ENCODE measurements at regions of chr3 and their contacts with region 1.

Region 1: GRCh38 chr3:128426128-128426921 is 40.4 kb downstream of the DNAJB8 start:
- DNase-seq: no peak
- ATAC-seq: peak; percentile 89
- H3K4me3 ChIP-seq: peak overlapping the region in 1 of 2 experiments; percentile 39; a peak in 1 of 4 replicates
- H3K27ac ChIP-seq: peak overlapping the region; percentile 65; the same call in 1 of the 2 replicates
- H3K4me1 ChIP-seq: peaks cover 37% of the 10 kb centered on the region
- H3K27me3 ChIP-seq: no peaks in the 10 kb centered on the region
- CTCF ChIP-seq: peak; percentile 100

Region 2: DNA sequence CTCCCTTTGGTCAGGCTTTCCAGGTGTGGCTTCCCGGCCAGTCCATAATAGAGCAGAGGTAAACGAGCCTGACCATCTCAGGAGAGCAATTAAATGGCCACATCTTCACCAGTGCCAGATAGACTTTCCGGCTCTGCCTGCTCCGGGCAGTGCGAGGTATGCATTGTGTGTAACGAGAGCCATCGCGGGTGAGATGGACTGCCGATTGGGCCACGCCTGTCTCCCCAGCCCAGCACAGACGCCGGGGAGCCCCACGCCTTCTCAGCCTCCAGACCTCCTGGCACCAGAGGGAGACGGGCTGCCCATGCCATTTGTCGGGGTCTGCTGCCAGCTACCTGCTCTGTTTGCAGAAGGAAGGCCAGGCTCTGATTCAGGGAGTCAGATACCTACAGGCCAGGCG is 22.1 kb before region 1 on chr3:
- CTCF ChIA-PET with region 1: interaction called, 4 read pairs
- POLR2A ChIA-PET with region 1: interaction called, 13 read pairs
- in situ Hi-C with region 1: no loop called
- intact Hi-C with region 1: no loop called
- DNase-seq: no peak
- ATAC-seq: no peak
- H3K4me3 ChIP-seq: no peak overlapping the region
- H3K27ac ChIP-seq: no peak overlapping the region
- H3K4me1 ChIP-seq: peaks cover 11% of the 10 kb centered on the region
- H3K27me3 ChIP-seq: no peaks in the 10 kb centered on the region
- CTCF ChIP-seq: no peak

Region 3: DNA sequence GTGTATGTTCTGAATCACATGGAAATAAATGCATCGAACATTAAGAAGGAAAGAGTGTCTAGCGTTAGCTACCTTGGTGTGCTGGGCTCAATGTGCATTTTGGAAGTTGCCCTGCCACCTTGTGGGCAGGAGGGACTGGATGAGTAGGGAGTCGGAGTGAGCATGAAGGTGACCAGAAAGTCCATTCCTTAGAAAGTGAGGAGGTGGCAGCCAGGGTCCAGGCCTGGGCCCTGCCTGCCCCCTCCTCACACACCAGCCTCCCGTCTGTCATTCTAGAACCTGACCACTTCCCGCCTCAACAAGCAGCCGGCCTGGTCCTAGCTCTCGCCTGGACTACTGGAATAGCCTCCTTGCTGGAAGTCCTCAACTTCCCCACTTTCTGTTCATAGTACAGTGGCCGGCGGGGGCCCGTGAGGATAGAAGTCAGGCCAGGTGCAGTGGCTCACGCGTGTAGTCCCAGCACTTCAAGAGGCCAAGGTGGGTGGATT is 76.9 kb after region 1 on chr3:
- CTCF ChIA-PET with region 1: interaction called, 5 read pairs
- POLR2A ChIA-PET with region 1: no interaction called
- in situ Hi-C with region 1: no loop called
- intact Hi-C with region 1: loop called (anchors 2 kb)
- DNase-seq: no peak
- ATAC-seq: peak; percentile 60
- H3K4me3 ChIP-seq: no peak overlapping the region
- H3K27ac ChIP-seq: no peak overlapping the region
- H3K4me1 ChIP-seq: peaks cover under 1% of the 10 kb centered on the region; the same call in 1 of the 2 replicates
- H3K27me3 ChIP-seq: peaks cover 3% of the 10 kb centered on the region; the same call in 1 of the 2 replicates
- CTCF ChIP-seq: peak; percentile 74

Region 4: GRCh38 chr3:128584412-128585020 is 158.2 kb after region 1 on chr3:
- CTCF ChIA-PET with region 1: no interaction called
- POLR2A ChIA-PET with region 1: no interaction called
- in situ Hi-C with region 1: no loop called
- intact Hi-C with region 1: loop called (anchors 2 kb)
- DNase-seq: no peak
- ATAC-seq: peak; percentile 100
- H3K4me3 ChIP-seq: peak overlapping the region in 1 of 2 experiments; percentile 29; a peak in 1 of 4 replicates
- H3K27ac ChIP-seq: peak overlapping the region; percentile 31; the same call in 1 of the 2 replicates
- H3K4me1 ChIP-seq: peaks cover 7% of the 10 kb centered on the region; the same call in 1 of the 2 replicates
- H3K27me3 ChIP-seq: no peaks in the 10 kb centered on the region
- CTCF ChIP-seq: peak; percentile 95

Region 5: GRCh38 chr3:128605091-128606046 is 179.0 kb after region 1 on chr3:
- CTCF ChIA-PET with region 1: interaction called, 16 read pairs
- POLR2A ChIA-PET with region 1: no interaction called
- in situ Hi-C with region 1: no loop called
- intact Hi-C with region 1: no loop called
- DNase-seq: no peak
- ATAC-seq: no peak
- H3K4me3 ChIP-seq: no peak overlapping the region
- H3K27ac ChIP-seq: no peak overlapping the region
- H3K4me1 ChIP-seq: 0 out of 2 replicates have a peak, but pooled peaks cover 3% of the 10 kb centered on the region
- H3K27me3 ChIP-seq: no peaks in the 10 kb centered on the region
- CTCF ChIP-seq: no peak